ENCODE measurements at regions of chr14 and their contacts with region 1.

Region 1: DNA sequence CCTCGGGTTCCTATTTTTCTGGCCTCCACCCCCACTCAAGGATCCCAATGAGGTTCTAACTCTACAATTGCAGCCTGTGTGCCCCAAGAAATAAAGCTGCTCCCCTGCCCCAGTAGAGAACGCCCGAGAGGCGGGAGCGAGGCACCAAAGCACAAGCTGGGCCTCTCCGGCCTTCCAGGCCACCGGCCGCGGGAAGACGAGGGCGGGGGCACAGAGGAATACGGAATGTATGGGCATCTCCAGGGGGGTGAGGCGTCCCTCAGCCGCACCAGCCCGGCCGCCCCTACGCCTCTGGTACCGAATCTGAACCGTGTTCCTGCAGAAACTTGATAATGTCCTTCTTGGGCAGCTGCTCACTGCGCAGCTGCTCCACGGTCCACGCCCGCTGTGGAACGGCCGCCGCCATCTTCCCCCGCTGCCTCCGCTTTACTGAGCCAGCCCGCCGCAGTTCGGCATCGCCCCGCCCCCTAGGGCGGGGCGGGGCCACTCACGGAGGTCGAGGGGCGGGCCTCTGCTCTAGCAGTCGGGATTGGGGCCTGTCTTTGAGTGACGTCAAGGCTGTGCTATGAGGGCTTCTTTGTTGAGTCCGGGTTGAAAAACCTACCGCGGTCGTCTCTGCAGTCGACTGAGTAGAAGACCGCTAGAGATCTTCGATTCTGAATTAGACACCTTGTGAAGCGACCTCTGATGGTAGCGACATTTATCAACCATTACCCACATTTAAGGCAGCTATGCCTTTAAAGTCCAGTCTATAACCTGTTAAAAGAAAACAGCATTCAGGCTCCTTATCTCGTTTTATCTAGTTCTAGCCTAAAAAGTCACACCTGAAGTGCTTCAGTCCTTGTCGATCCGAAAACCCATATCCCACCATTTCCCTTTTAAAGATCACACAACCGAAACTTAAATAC is at the start of gene FKBP3:
- DNase-seq: peak; percentile 96
- H3K4me3 Mint-ChIP-seq: peak within 1 kb of the TSS; percentile 99
- H3K27ac Mint-ChIP-seq: peak within 1 kb of the TSS; percentile 98
- H3K4me1 Mint-ChIP-seq: peaks cover 28% of the 10 kb centered on the region
- H3K27me3 Mint-ChIP-seq: no peaks in the 10 kb centered on the region
- total RNA-seq, gene FKBP3: 71.2 to 72.4 TPM

Region 2: GRCh38 chr14:43671716-43672485 is 1462.4 kb before region 1 on chr14:
- CTCF ChIA-PET with region 1: no interaction called
- POLR2A ChIA-PET with region 1: no interaction called
- intact Hi-C with region 1: no loop called
- DNase-seq: no peak
- H3K4me3 Mint-ChIP-seq: no peak overlapping the region
- H3K27ac Mint-ChIP-seq: no peak overlapping the region
- H3K4me1 Mint-ChIP-seq: no peaks in the 10 kb centered on the region
- H3K27me3 Mint-ChIP-seq: no peaks in the 10 kb centered on the region

Region 3: GRCh38 chr14:44897045-44897844 is 237.1 kb before region 1 on chr14:
- CTCF ChIA-PET with region 1: no interaction called
- POLR2A ChIA-PET with region 1: interaction called, 4 read pairs
- intact Hi-C with region 1: loop called (anchors 1 kb)
- DNase-seq: peak; percentile 99
- H3K4me3 Mint-ChIP-seq: peak overlapping the region; percentile 87
- H3K27ac Mint-ChIP-seq: peak overlapping the region; percentile 83
- H3K4me1 Mint-ChIP-seq: peaks cover 14% of the 10 kb centered on the region
- H3K27me3 Mint-ChIP-seq: no peaks in the 10 kb centered on the region

Region 4: DNA sequence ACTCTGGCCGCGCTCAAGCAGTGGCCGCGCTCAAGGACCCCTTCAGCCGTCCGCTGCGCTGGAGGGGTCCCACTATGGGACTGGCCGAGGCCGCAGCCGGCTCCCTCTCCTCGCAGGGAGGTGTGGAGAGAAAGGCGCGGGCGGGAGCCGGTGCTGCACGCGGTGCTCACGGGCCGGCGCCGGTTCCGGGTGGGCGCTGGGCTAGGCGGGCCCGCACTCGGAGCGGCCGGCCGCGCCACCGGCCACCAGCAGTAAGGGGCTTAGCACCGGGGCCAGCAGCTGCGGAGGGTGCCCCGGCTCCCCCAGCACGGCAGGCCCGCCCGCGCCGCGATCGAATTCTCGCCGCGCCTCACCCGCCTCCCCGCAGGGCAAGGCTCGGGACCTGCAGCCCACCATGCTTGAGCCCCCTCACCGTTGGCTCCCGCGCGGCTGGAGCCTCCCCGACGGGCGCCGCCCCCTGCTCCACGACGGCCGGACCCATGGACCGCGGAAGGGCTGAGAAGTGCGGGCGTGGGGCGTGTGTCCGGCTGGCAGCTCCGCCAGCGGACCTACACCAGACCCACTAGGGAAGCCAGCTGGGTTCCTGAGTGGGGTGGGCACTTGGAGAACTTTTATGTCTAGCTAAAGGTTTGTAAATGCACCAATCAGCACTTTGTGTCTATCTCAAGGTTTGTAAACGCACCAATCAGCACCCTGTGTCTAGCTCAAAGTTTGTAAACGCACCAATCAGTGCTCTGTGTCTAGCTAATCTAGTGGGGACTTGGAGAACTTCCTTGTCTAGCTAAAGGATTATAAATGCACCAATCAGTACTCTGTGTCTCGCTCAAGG is 222.1 kb before region 1 on chr14:
- CTCF ChIA-PET with region 1: interaction called, 7 read pairs
- POLR2A ChIA-PET with region 1: no interaction called
- intact Hi-C with region 1: loop called (anchors 1 kb)
- DNase-seq: no peak
- H3K4me3 Mint-ChIP-seq: no peak overlapping the region
- H3K27ac Mint-ChIP-seq: no peak overlapping the region
- H3K4me1 Mint-ChIP-seq: peaks cover 6% of the 10 kb centered on the region
- H3K27me3 Mint-ChIP-seq: peaks cover 23% of the 10 kb centered on the region

Region 5: GRCh38 chr14:44961604-44962333 is 172.5 kb before region 1 on chr14 and contains the starts of genes KLHL28 and TOGARAM1:
- CTCF ChIA-PET with region 1: interaction called, 5 read pairs
- POLR2A ChIA-PET with region 1: interaction called, 26 read pairs
- intact Hi-C with region 1: loop called (anchors 1 kb)
- DNase-seq: peak; percentile 97
- H3K4me3 Mint-ChIP-seq: no peak within 1 kb of the TSS
- H3K27ac Mint-ChIP-seq: no peak within 1 kb of the TSS
- H3K4me1 Mint-ChIP-seq: peaks cover 54% of the 10 kb centered on the region
- H3K27me3 Mint-ChIP-seq: no peaks in the 10 kb centered on the region
- total RNA-seq, gene KLHL28: 11.0 to 11.8 TPM
- total RNA-seq, gene TOGARAM1: 4.5 to 5.4 TPM

Region 6: GRCh38 chr14:45015133-45015532 is 119.2 kb before region 1 on chr14:
- CTCF ChIA-PET with region 1: no interaction called
- POLR2A ChIA-PET with region 1: no interaction called
- intact Hi-C with region 1: no loop called
- DNase-seq: no peak
- H3K4me3 Mint-ChIP-seq: no peak overlapping the region
- H3K27ac Mint-ChIP-seq: no peak overlapping the region
- H3K4me1 Mint-ChIP-seq: no peaks in the 10 kb centered on the region
- H3K27me3 Mint-ChIP-seq: no peaks in the 10 kb centered on the region

Region 7: DNA sequence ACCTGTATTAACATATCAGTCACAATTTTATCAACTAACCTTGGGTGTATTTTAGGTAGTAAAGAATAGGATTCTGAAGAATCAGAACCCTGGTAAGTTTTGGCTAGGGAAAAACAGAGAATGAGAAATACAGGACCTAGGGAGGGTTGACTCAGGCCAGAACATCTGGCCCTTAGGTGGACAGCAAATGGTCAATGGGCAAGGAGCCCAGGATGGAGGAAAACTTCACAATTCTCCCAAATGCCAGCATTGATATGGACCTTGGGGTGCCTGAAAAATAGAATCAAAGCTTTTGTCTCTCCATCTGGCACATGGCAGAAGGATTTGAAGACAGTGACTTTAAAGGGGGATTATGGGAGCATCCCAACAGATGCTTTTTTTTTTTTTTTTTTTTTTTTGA is 83.1 kb before region 1 on chr14:
- CTCF ChIA-PET with region 1: no interaction called
- POLR2A ChIA-PET with region 1: no interaction called
- intact Hi-C with region 1: no loop called
- DNase-seq: no peak
- H3K4me3 Mint-ChIP-seq: no peak overlapping the region
- H3K27ac Mint-ChIP-seq: no peak overlapping the region
- H3K4me1 Mint-ChIP-seq: no peaks in the 10 kb centered on the region
- H3K27me3 Mint-ChIP-seq: no peaks in the 10 kb centered on the region

Region 8: DNA sequence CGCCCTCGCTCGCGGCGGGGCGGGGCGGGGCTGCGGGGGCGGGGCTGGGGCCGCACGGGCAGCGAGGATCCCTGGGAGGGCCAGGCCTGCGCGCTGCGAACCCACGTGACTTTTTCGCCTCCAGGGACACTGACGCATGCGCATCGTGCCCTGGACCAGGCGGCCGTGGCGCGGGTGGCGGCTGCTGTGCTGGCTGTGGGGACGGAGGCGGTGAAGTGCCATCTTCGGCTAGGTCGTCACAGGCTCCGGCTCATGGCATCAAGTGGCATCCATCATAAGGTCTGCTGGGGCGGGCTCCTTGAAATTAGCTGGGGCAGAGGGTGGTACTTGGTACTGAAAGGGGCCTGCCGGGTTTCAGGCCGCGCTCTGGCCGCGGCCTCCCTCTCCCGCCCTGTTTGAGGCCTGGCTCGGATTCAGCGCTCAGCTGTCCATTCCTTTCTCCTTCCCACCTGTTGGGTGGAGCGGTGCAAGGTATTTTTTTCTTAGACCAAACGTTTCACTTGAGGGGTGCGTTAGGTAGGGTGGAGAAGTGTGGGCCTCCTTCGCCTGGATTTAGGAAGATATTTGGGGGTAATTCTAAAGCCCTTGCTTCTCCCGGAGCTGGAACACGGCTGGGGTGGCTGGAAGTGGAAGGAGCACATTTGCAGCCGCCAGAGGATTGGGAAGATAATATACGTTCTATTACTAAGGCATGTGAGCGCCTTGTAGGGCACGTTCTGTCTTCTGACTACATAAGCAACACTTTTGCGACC is 50.2 kb before region 1 on chr14 and contains the start of gene PRPF39:
- CTCF ChIA-PET with region 1: no interaction called
- POLR2A ChIA-PET with region 1: interaction called, 5 read pairs
- intact Hi-C with region 1: loop called (anchors 1 kb)
- DNase-seq: peak; percentile 97
- H3K4me3 Mint-ChIP-seq: peak within 1 kb of the TSS; percentile 95
- H3K27ac Mint-ChIP-seq: peak within 1 kb of the TSS; percentile 95
- H3K4me1 Mint-ChIP-seq: peaks cover 41% of the 10 kb centered on the region
- H3K27me3 Mint-ChIP-seq: no peaks in the 10 kb centered on the region
- total RNA-seq, gene PRPF39: 38.9 to 40.9 TPM

Region 9: GRCh38 chr14:45112889-45113781 is 21.2 kb before region 1 on chr14:
- CTCF ChIA-PET with region 1: interaction called, 3 read pairs
- POLR2A ChIA-PET with region 1: interaction called, 5 read pairs
- intact Hi-C with region 1: loop called (anchors 1 kb)
- DNase-seq: no peak
- H3K4me3 Mint-ChIP-seq: no peak overlapping the region
- H3K27ac Mint-ChIP-seq: peak overlapping the region; percentile 75
- H3K4me1 Mint-ChIP-seq: peaks cover 30% of the 10 kb centered on the region
- H3K27me3 Mint-ChIP-seq: no peaks in the 10 kb centered on the region

Region 10: GRCh38 chr14:45267071-45267470 is 132.8 kb after region 1 on chr14:
- CTCF ChIA-PET with region 1: interaction called, 15 read pairs
- POLR2A ChIA-PET with region 1: no interaction called
- intact Hi-C with region 1: loop called (anchors 1 kb)
- DNase-seq: no peak
- H3K4me3 Mint-ChIP-seq: no peak overlapping the region
- H3K27ac Mint-ChIP-seq: no peak overlapping the region
- H3K4me1 Mint-ChIP-seq: no peaks in the 10 kb centered on the region
- H3K27me3 Mint-ChIP-seq: peaks cover 6% of the 10 kb centered on the region